ENCODE measurements at regions of chr11 and their contacts with region 1.

Region 1: GRCh38 chr11:108008656-108009496 is at the start of gene CUL5:
- DNase-seq: peak; percentile 84 to 94 (median 90)
- ATAC-seq: peak; percentile 94
- H3K4me3 ChIP-seq: peak within 1 kb of the TSS; percentile 94
- H3K4me3 Mint-ChIP-seq: peak within 1 kb of the TSS in 9 of 10 donors; percentile 89 to 100 (median 99)
- H3K27ac ChIP-seq: peak within 1 kb of the TSS; percentile 94
- H3K27ac Mint-ChIP-seq: peak within 1 kb of the TSS; percentile 94 to 99 (median 96)
- H3K4me1 ChIP-seq: peaks cover 15 to 25% of the 10 kb centered on the region in 2 donors
- H3K4me1 Mint-ChIP-seq: peaks cover 7 to 18% (median 12%) of the 10 kb centered on the region in 7 donors
- H3K27me3 ChIP-seq: no peaks in the 10 kb centered on the region
- H3K27me3 Mint-ChIP-seq: no peaks in the 10 kb centered on the region
- total RNA-seq, gene CUL5: 32.3 to 59.7 (median 39.2) TPM

Region 2: DNA sequence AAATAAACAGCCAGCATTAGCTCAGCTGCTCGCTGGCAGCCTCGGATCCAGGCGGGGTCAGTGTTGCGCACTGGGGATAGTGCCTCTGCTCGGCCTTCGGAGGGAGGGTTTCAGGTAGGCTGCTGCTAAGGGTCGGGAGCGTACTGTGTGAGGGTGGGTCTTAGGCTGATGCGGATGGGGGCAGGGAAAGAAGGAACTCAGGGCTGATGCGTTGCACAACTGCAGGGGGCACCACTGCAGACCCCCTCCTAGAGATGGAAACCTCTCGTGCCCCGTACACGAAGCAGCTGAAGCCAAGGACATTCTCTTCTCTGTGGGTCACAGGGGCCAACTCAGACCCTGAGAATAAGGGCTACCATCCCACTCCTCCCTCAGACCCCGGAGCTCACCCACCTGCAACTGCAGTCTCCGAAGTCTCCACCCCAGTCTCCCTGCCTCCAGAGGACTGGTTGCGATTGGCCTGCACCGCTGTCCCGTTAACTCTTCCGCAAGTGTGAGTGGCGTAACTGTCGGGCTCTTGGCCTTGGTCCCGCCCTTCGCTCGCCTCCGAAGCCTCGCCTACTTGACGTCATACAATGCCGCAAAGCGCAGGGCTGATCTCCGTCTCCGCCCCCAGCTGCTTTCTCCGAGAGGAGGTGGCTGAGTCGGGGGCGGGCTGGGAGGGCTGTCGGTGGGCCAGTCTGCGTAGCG is 1931.8 kb before region 1 on chr11 and contains the start of gene KBTBD3:
- CTCF ChIA-PET with region 1: no interaction called
- POLR2A ChIA-PET with region 1: no interaction called
- intact Hi-C with region 1: loop called in 1 of 2 experiments (anchors 2 kb)
- DNase-seq: peak; percentile 90 to 99 (median 98)
- ATAC-seq: peak; percentile 93
- H3K4me3 ChIP-seq: peak within 1 kb of the TSS; percentile 85
- H3K4me3 Mint-ChIP-seq: peak within 1 kb of the TSS; percentile 95 to 100 (median 98)
- H3K27ac ChIP-seq: peak within 1 kb of the TSS; percentile 91
- H3K27ac Mint-ChIP-seq: peak within 1 kb of the TSS; percentile 91 to 99 (median 98)
- H3K4me1 ChIP-seq: peaks cover 29 to 35% of the 10 kb centered on the region in 2 donors
- H3K4me1 Mint-ChIP-seq: peaks cover 34 to 76% (median 69%) of the 10 kb centered on the region in 7 donors
- H3K27me3 ChIP-seq: no peaks in the 10 kb centered on the region
- H3K27me3 Mint-ChIP-seq: no peaks in the 10 kb centered on the region
- total RNA-seq, gene KBTBD3: 5.1 to 16.6 (median 7.3) TPM

Region 3: DNA sequence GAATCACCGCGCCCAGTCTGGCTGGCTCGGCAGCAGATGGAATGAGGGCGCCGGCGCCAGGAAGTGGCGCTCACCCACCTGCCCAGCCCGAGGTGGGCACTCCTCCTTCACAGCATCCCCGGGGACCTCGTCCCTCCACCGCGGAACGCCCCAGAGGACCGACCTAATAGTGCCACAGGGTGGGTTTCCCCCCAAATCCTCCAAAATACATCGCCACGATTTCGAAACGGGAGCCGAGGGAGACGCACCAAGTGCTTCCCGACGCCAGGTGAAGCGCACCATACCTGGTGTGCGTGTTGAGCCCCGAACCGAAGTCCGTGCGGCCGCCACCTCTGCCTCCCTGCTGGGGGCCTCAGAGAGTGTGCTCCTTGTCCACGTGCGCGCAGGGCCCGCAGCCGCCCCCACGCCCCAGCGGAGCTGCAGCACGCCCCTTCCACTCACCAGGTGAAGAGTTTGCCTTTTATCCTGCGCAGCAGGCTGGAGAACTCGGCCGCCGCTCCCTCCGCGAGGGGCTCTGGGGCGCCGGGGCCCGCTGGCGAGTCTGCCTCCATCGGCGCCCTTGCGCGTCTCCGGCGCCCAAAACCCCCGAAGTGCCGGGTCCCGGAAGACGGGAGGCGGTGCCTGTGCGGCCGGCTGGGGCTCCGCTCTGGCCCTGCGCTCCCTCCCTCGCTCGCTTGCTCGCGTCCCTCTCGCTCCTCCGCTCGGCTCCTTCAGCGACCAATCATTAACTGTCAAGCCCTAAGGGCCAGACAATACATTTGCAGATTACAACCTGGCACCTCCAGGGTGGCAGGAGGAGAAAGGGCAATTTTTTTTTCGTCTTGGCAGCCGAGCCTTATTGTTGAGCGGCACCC is 150.4 kb before region 1 on chr11 and contains the start of gene SLC35F2:
- CTCF ChIA-PET with region 1: no interaction called
- POLR2A ChIA-PET with region 1: no interaction called
- intact Hi-C with region 1: loop called (anchors 1 kb)
- DNase-seq: peak; percentile 15 to 81 (median 45)
- ATAC-seq: peak; percentile 88
- H3K4me3 ChIP-seq: peak within 1 kb of the TSS; percentile 88
- H3K4me3 Mint-ChIP-seq: peak within 1 kb of the TSS; percentile 89 to 98 (median 95)
- H3K27ac ChIP-seq: peak within 1 kb of the TSS; percentile 65
- H3K27ac Mint-ChIP-seq: peak within 1 kb of the TSS; percentile 21 to 88 (median 77)
- H3K4me1 ChIP-seq: no peaks in the 10 kb centered on the region
- H3K4me1 Mint-ChIP-seq: peaks cover 5 to 33% (median 26%) of the 10 kb centered on the region in 7 donors
- H3K27me3 ChIP-seq: no peaks in the 10 kb centered on the region
- H3K27me3 Mint-ChIP-seq: peaks cover 0 to 17% (median 4%) of the 10 kb centered on the region in 5 donors
- total RNA-seq, gene SLC35F2: 3.8 to 8.9 (median 4.5) TPM

Region 4: GRCh38 chr11:108069947-108070346 is 61.1 kb after region 1 on chr11:
- CTCF ChIA-PET with region 1: no interaction called
- POLR2A ChIA-PET with region 1: no interaction called
- intact Hi-C with region 1: loop called in 1 of 2 experiments (anchors 2 kb)
- DNase-seq: peak in 7 of 9 donors; percentile 7 to 37 (median 21)
- ATAC-seq: peak; percentile 72
- H3K4me3 ChIP-seq: peak overlapping the region; percentile 8
- H3K4me3 Mint-ChIP-seq: peak overlapping the region in 8 of 10 donors; percentile 23 to 63 (median 52)
- H3K27ac ChIP-seq: peak overlapping the region; percentile 40
- H3K27ac Mint-ChIP-seq: peak overlapping the region; percentile 17 to 86 (median 76)
- H3K4me1 ChIP-seq: peaks cover 0 to 6% of the 10 kb centered on the region in 2 donors
- H3K4me1 Mint-ChIP-seq: peaks cover 11 to 43% (median 19%) of the 10 kb centered on the region in 7 donors
- H3K27me3 ChIP-seq: no peaks in the 10 kb centered on the region
- H3K27me3 Mint-ChIP-seq: no peaks in the 10 kb centered on the region

Region 5: GRCh38 chr11:108467091-108467823 is 458.4 kb after region 1 on chr11 and contains the start of gene C11orf65:
- CTCF ChIA-PET with region 1: no interaction called
- POLR2A ChIA-PET with region 1: interaction called, 3 read pairs
- intact Hi-C with region 1: loop called (anchors 1 to 2 kb)
- DNase-seq: peak; percentile 88 to 97 (median 94)
- ATAC-seq: peak; percentile 98
- H3K4me3 ChIP-seq: peak within 1 kb of the TSS; percentile 81
- H3K4me3 Mint-ChIP-seq: peak within 1 kb of the TSS; percentile 93 to 100 (median 98)
- H3K27ac ChIP-seq: peak within 1 kb of the TSS; percentile 93
- H3K27ac Mint-ChIP-seq: peak within 1 kb of the TSS; percentile 98 to 100 (median 100)
- H3K4me1 ChIP-seq: peaks cover 3 to 5% of the 10 kb centered on the region in 2 donors
- H3K4me1 Mint-ChIP-seq: peaks cover 0 to 27% (median 17%) of the 10 kb centered on the region in 7 donors
- H3K27me3 ChIP-seq: no peaks in the 10 kb centered on the region
- H3K27me3 Mint-ChIP-seq: no peaks in the 10 kb centered on the region
- total RNA-seq, gene C11orf65: 0.27 to 1.5 (median 0.51) TPM

Region 6: GRCh38 chr11:108593214-108593922 is 584.5 kb after region 1 on chr11 and contains the start of gene EXPH5:
- CTCF ChIA-PET with region 1: no interaction called
- POLR2A ChIA-PET with region 1: no interaction called
- intact Hi-C with region 1: loop called (anchors 1 kb)
- DNase-seq: peak; percentile 62 to 89 (median 87)
- ATAC-seq: peak; percentile 97
- H3K4me3 ChIP-seq: peak within 1 kb of the TSS; percentile 75
- H3K4me3 Mint-ChIP-seq: peak within 1 kb of the TSS; percentile 90 to 100 (median 97)
- H3K27ac ChIP-seq: peak within 1 kb of the TSS; percentile 81
- H3K27ac Mint-ChIP-seq: peak within 1 kb of the TSS; percentile 79 to 98 (median 95)
- H3K4me1 ChIP-seq: peaks cover 0 to 13% of the 10 kb centered on the region in 2 donors
- H3K4me1 Mint-ChIP-seq: peaks cover 12 to 27% (median 22%) of the 10 kb centered on the region in 7 donors
- H3K27me3 ChIP-seq: no peaks in the 10 kb centered on the region
- H3K27me3 Mint-ChIP-seq: peaks cover 0 to 60% (median 0%) of the 10 kb centered on the region in 5 donors
- total RNA-seq, gene EXPH5: 1.9 to 8.3 (median 5.9) TPM

Region 7: GRCh38 chr11:108664730-108665525 is 656.1 kb after region 1 on chr11 and contains the start of gene DDX10:
- CTCF ChIA-PET with region 1: interaction called, 7 read pairs
- POLR2A ChIA-PET with region 1: interaction called, 10 read pairs
- intact Hi-C with region 1: loop called (anchors 1 kb)
- DNase-seq: peak; percentile 95 to 99 (median 98)
- ATAC-seq: peak; percentile 99
- H3K4me3 ChIP-seq: peak within 1 kb of the TSS; percentile 80
- H3K4me3 Mint-ChIP-seq: peak within 1 kb of the TSS; percentile 91 to 100 (median 100)
- H3K27ac ChIP-seq: peak within 1 kb of the TSS; percentile 77
- H3K27ac Mint-ChIP-seq: peak within 1 kb of the TSS; percentile 79 to 100 (median 97)
- H3K4me1 ChIP-seq: peaks cover 18 to 22% of the 10 kb centered on the region in 2 donors
- H3K4me1 Mint-ChIP-seq: peaks cover 24 to 56% (median 47%) of the 10 kb centered on the region in 7 donors
- H3K27me3 ChIP-seq: no peaks in the 10 kb centered on the region
- H3K27me3 Mint-ChIP-seq: peaks cover 0 to 9% (median 0%) of the 10 kb centered on the region in 5 donors
- total RNA-seq, gene DDX10: 16.7 to 34.6 (median 22.8) TPM